CD4-positive, alpha-beta T cell (primary cell): ENCODE measurements at regions of chr17 and their contacts with region 1.

Region 1: DNA sequence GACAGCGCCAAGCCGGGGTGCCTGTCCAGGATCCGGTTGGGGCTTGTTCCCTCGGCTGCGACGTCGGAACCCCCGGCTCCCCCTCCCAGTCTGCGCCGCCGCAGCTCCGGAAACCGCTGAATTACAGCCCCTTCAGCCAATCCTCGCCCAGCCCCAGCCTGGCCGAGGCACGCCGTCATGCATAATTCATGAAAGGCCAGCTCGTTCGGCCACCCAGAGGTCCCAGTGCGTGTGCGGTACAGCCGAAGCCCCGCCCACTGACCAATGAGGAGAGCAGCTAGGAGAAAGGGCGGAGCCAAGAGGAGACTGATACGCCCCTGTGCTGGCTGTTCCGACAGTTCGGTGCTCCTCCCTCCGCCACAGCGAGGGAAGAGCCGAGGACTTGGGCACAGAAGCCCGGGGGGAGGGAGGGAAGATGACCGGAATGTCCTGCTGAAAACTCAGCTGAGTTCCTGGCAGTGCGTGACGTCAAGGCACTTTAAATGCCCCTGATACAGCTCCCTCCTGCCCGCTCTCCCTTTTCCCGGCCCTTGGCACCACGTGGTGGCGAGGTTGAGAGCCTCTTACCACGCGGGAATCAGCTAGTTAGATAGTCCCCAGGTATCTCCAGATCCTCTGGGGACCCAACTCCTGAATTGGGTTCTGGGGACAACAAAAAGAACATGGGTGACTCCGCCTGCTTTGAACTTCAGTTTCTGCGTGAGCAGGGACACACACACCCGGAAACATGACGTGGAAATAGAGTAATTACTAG is at the start of gene STAT3:
- DNase-seq: peak; percentile 100
- ATAC-seq: peak; percentile 78
- H3K4me3 ChIP-seq: peak within 1 kb of the TSS; percentile 92
- H3K4me3 Mint-ChIP-seq: peak within 1 kb of the TSS; percentile 97
- H3K27ac ChIP-seq: peak within 1 kb of the TSS; percentile 99 to 100
- H3K27ac Mint-ChIP-seq: peak within 1 kb of the TSS; percentile 99
- H3K4me1 ChIP-seq: peaks cover 26% of the 10 kb centered on the region
- H3K4me1 Mint-ChIP-seq: peaks cover 52% of the 10 kb centered on the region
- H3K27me3 ChIP-seq: no peaks in the 10 kb centered on the region
- H3K27me3 Mint-ChIP-seq: no peaks in the 10 kb centered on the region
- CTCF ChIP-seq: no peak
- total RNA-seq, gene STAT3: 315 to 319 TPM

Region 2: DNA sequence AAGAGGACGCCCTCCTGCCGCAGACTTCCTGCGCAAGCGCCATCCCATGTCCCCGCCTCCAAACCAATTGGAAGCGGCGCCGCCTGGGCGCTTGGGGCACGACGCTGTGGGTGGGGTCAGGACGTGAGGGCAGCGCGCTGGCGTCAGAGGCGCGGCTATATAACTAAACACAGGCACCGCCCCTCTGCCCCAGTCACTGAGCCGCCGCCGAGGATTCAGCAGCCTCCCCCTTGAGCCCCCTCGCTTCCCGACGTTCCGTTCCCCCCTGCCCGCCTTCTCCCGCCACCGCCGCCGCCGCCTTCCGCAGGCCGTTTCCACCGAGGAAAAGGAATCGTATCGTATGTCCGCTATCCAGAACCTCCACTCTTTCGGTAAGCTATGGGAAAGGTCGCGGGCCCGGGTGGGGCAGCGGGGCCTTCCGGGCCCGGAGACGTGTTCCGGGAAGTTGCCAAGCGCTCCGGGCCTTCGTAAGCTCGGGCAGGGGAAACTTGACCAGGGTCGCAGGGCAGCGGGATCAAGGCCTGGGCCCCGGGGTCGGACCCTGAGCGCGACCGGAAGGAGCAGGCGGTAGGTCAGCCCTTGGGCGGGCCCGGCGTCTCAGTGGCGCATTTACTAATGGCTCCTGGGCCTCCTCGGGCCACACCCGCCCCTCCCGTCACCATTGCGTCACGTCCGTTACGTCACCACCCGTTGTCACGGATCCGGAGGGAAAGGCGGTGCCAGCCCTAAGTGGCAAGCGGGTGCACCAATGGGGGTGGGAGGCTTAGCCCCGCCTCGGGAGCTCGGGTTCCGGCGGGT is 699.7 kb before region 1 on chr17 and contains the start of gene EIF1:
- CTCF ChIA-PET with region 1: no interaction called
- POLR2A ChIA-PET with region 1: interaction called, 16 read pairs
- intact Hi-C with region 1: no loop called
- DNase-seq: peak; percentile 99 to 100 (median 100)
- ATAC-seq: peak; percentile 74
- H3K4me3 ChIP-seq: peak within 1 kb of the TSS; percentile 81
- H3K4me3 Mint-ChIP-seq: peak within 1 kb of the TSS; percentile 99
- H3K27ac ChIP-seq: peak within 1 kb of the TSS; percentile 99 to 100
- H3K27ac Mint-ChIP-seq: peak within 1 kb of the TSS; percentile 100
- H3K4me1 ChIP-seq: peaks cover 36% of the 10 kb centered on the region
- H3K4me1 Mint-ChIP-seq: peaks cover 50% of the 10 kb centered on the region
- H3K27me3 ChIP-seq: no peaks in the 10 kb centered on the region
- H3K27me3 Mint-ChIP-seq: peaks cover 10% of the 10 kb centered on the region
- CTCF ChIP-seq: no peak
- total RNA-seq, gene EIF1: 3,351 to 3,391 TPM

Region 3: GRCh38 chr17:42248351-42249179 is 140.0 kb before region 1 on chr17:
- CTCF ChIA-PET with region 1: no interaction called
- POLR2A ChIA-PET with region 1: interaction called, 55 read pairs
- intact Hi-C with region 1: loop called in 1 of 2 experiments (anchors 5 kb)
- DNase-seq: peak; percentile 64 to 94 (median 80)
- ATAC-seq: peak; percentile 86
- H3K4me3 ChIP-seq: peak overlapping the region; percentile 42
- H3K4me3 Mint-ChIP-seq: peak overlapping the region; percentile 85
- H3K27ac ChIP-seq: peak overlapping the region; percentile 85 to 86
- H3K27ac Mint-ChIP-seq: peak overlapping the region; percentile 96
- H3K4me1 ChIP-seq: peaks cover 55% of the 10 kb centered on the region
- H3K4me1 Mint-ChIP-seq: peaks cover 66% of the 10 kb centered on the region
- H3K27me3 ChIP-seq: no peaks in the 10 kb centered on the region
- H3K27me3 Mint-ChIP-seq: no peaks in the 10 kb centered on the region
- CTCF ChIP-seq: no peak

Region 4: GRCh38 chr17:42322382-42323267 is 65.9 kb before region 1 on chr17:
- CTCF ChIA-PET with region 1: interaction called, 3 read pairs
- POLR2A ChIA-PET with region 1: interaction called, 71 read pairs
- intact Hi-C with region 1: loop called in 1 of 2 experiments (anchors 5 kb)
- DNase-seq: peak; percentile 89 to 98 (median 95)
- ATAC-seq: peak; percentile 97
- H3K4me3 ChIP-seq: no peak overlapping the region
- H3K4me3 Mint-ChIP-seq: no peak overlapping the region
- H3K27ac ChIP-seq: peak overlapping the region in 1 of 2 donors; percentile 18
- H3K27ac Mint-ChIP-seq: peak overlapping the region; percentile 76
- H3K4me1 ChIP-seq: peaks cover 26% of the 10 kb centered on the region
- H3K4me1 Mint-ChIP-seq: peaks cover 37% of the 10 kb centered on the region
- H3K27me3 ChIP-seq: no peaks in the 10 kb centered on the region
- H3K27me3 Mint-ChIP-seq: no peaks in the 10 kb centered on the region
- CTCF ChIP-seq: peak; percentile 100

Region 5: DNA sequence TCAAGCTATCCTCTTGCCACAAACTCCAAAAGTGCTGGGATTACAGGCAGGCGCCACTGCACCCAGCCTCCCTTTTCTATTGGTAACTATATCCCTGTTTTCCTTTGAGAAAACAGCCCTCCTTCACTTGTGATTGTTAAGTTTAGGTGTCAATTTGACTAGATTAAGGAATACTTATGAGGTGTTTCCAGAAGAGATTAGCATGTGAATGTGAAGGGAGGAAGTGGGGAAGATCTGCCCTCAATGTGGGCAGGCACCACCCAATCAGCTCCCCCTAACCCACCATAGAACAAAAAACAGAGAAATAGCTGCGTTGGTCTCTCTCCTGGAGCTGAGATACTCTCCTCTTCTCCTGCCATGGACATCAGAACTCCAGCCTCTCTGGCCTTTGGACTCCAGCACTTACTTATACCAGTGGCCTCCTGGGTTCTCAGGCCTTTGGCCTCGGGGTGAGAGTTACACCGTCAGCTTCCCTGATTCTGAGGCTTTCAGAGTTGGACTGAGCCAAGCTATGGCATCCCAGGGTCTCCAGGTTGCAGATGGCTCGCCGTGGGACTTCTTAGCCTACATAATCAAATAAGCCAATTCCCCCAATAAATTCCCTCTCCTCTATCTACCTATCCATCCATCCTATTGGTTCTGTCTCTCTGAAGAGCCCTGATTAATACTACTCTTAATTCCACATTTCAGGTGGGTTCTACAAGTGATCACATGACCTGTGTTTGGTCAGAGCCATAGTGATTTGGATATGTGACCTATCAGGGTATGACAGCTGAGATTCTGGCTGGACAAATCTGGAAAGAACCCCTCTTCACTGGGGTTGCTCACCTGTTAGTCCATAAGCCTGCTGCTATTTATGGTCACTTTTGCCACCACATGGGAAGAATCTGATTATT is 11.6 kb after region 1 on chr17:
- CTCF ChIA-PET with region 1: interaction called, 9 read pairs
- POLR2A ChIA-PET with region 1: interaction called, 50 read pairs
- intact Hi-C with region 1: no loop called
- DNase-seq: peak in 2 of 14 experiments; percentile 14 to 30
- ATAC-seq: no peak
- H3K4me3 ChIP-seq: no peak overlapping the region
- H3K4me3 Mint-ChIP-seq: no peak overlapping the region
- H3K27ac ChIP-seq: no peak overlapping the region
- H3K27ac Mint-ChIP-seq: no peak overlapping the region
- H3K4me1 ChIP-seq: peaks cover 11% of the 10 kb centered on the region
- H3K4me1 Mint-ChIP-seq: peaks cover 10% of the 10 kb centered on the region
- H3K27me3 ChIP-seq: no peaks in the 10 kb centered on the region
- H3K27me3 Mint-ChIP-seq: no peaks in the 10 kb centered on the region
- CTCF ChIP-seq: no peak

Region 6: DNA sequence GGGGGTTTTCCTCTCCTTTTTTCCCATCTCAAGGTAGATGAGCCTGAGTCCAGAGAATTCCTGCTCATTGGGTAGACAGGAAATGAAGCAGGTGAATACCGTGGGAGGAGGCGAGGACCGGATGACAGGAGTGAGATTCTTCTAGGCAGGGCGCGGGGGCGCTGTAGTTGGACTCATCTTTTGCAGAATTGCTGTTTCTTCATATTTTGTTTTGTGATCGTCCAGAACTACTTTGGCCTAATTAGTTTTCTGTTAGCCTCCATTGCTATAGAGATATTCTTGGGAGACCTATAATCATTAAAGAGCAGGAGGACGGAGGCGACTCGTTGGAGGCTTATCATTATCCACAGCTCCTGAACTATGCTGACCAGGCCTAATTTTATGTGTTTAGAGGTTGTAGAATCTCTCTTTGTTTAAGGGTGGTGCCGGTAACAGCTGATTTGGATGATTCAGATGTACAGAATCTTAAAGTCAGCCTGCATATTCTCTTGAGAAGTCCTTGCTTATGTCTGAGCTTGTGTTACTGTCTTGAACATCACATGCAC is 70.8 kb after region 1 on chr17:
- CTCF ChIA-PET with region 1: no interaction called
- POLR2A ChIA-PET with region 1: interaction called, 17 read pairs
- intact Hi-C with region 1: no loop called
- DNase-seq: peak in 4 of 14 experiments; percentile 39 to 44 (median 41)
- ATAC-seq: peak; percentile 11
- H3K4me3 ChIP-seq: peak overlapping the region; percentile 64
- H3K4me3 Mint-ChIP-seq: peak overlapping the region; percentile 92
- H3K27ac ChIP-seq: peak overlapping the region in 1 of 2 donors; percentile 3
- H3K27ac Mint-ChIP-seq: peak overlapping the region; percentile 85
- H3K4me1 ChIP-seq: peaks cover 45% of the 10 kb centered on the region
- H3K4me1 Mint-ChIP-seq: peaks cover 47% of the 10 kb centered on the region
- H3K27me3 ChIP-seq: no peaks in the 10 kb centered on the region
- H3K27me3 Mint-ChIP-seq: no peaks in the 10 kb centered on the region
- CTCF ChIP-seq: peak; percentile 23